ENCODE measurements at regions of chr14 and their contacts with region 1.

Region 1: DNA sequence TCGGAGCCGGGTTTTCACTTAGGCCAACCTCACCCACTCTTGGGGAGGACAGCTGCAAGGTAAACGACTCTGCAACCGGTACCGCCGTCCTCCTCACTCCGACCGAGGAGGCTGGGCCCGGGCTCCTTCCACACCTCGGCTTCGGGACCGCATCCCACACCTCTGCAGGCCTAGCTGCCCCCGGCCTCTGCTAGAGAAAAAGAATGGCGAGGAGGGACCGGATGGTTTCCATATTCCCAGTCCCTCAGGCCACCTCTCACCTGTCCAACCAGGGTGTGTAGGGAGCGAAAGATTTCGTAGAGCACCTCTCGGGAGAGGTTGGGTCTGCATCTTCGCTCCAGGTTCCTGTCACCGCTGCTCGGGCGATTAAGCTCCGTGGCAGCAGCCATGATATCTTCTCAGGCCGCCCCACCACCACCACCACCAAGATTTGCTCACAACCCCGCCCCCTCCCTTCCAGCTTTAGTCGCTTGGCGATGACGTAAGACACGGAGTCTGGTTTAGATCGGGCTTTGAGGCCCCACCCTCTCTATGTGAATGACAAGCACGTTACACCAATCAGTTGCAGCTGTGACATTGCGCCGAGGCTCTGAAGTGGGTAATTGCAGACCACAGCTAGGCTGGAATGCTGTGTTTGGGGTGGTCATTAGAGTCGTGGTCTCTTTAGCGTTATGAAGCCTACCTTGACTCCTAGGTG is at the start of gene MBIP:
- DNase-seq: peak; percentile 79 to 97 (median 89)
- ATAC-seq: peak; percentile 96
- H3K4me3 ChIP-seq: peak within 1 kb of the TSS; percentile 86 to 91
- H3K4me3 Mint-ChIP-seq: peak within 1 kb of the TSS; percentile 98
- H3K27ac ChIP-seq: peak within 1 kb of the TSS; percentile 63 to 74
- H3K27ac Mint-ChIP-seq: peak within 1 kb of the TSS; percentile 97
- H3K4me1 ChIP-seq: peaks cover 16% of the 10 kb centered on the region
- H3K4me1 Mint-ChIP-seq: peaks cover 41% of the 10 kb centered on the region
- H3K27me3 ChIP-seq: no peaks in the 10 kb centered on the region
- H3K27me3 Mint-ChIP-seq: peaks cover 5% of the 10 kb centered on the region
- CTCF ChIP-seq: no peak
- total RNA-seq, gene MBIP: 57.4 to 58.1 TPM

Region 2: DNA sequence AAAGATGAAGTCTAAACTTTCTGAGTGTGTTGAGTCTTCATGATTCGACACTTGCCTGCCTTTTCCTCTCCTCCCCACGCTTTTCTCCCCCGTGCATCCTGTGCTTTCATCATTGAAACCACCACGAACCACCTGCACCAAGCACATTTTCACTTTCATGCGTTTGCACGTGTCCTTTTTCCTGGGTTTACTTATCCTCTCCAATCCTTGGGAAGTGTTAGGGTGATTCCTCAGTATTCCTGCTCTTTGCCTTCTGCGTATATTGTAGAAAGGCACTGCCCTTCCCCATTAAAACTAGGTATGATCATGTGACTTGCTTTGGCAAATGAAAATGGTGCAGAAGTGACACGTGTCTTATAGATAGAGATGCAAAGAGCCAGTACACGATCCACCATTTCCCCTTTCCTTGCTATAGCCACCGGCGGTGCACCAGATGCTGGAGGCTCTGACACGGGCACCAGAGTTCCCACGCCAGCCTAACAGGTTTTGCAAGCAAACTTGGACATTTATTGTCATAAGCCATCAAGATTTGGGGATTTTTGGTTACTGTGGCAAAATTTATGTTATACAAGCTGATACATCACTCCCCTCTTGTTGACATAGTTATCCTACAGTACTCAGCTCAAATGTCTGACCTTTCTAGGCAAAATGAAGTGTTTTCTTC is 387.6 kb before region 1 on chr14:
- CTCF ChIA-PET with region 1: no interaction called
- POLR2A ChIA-PET with region 1: no interaction called
- intact Hi-C with region 1: loop called in 1 of 2 experiments (anchors 10 kb)
- DNase-seq: peak in 6 of 9 experiments; percentile 9 to 65 (median 28)
- ATAC-seq: peak; percentile 79
- H3K4me3 ChIP-seq: peak overlapping the region; percentile 31 to 56
- H3K4me3 Mint-ChIP-seq: peak overlapping the region; percentile 88
- H3K27ac ChIP-seq: peak overlapping the region in 1 of 2 experiments; percentile 30
- H3K27ac Mint-ChIP-seq: peak overlapping the region; percentile 90
- H3K4me1 ChIP-seq: peaks cover 17% of the 10 kb centered on the region
- H3K4me1 Mint-ChIP-seq: peaks cover 36% of the 10 kb centered on the region
- H3K27me3 ChIP-seq: no peaks in the 10 kb centered on the region
- H3K27me3 Mint-ChIP-seq: no peaks in the 10 kb centered on the region
- CTCF ChIP-seq: no peak

Region 3: GRCh38 chr14:36467332-36467731 is 147.0 kb after region 1 on chr14:
- CTCF ChIA-PET with region 1: no interaction called
- POLR2A ChIA-PET with region 1: no interaction called
- intact Hi-C with region 1: no loop called
- DNase-seq: no peak
- ATAC-seq: no peak
- H3K4me3 ChIP-seq: no peak overlapping the region
- H3K4me3 Mint-ChIP-seq: no peak overlapping the region
- H3K27ac ChIP-seq: no peak overlapping the region
- H3K27ac Mint-ChIP-seq: no peak overlapping the region
- H3K4me1 ChIP-seq: no peaks in the 10 kb centered on the region
- H3K4me1 Mint-ChIP-seq: no peaks in the 10 kb centered on the region
- H3K27me3 ChIP-seq: no peaks in the 10 kb centered on the region
- H3K27me3 Mint-ChIP-seq: peaks cover 6% of the 10 kb centered on the region
- CTCF ChIP-seq: no peak

Measured in CD8-positive, alpha-beta T cell (primary cell).